ENCODE measurements at regions of chr1 and their contacts with region 1.

Region 1: DNA sequence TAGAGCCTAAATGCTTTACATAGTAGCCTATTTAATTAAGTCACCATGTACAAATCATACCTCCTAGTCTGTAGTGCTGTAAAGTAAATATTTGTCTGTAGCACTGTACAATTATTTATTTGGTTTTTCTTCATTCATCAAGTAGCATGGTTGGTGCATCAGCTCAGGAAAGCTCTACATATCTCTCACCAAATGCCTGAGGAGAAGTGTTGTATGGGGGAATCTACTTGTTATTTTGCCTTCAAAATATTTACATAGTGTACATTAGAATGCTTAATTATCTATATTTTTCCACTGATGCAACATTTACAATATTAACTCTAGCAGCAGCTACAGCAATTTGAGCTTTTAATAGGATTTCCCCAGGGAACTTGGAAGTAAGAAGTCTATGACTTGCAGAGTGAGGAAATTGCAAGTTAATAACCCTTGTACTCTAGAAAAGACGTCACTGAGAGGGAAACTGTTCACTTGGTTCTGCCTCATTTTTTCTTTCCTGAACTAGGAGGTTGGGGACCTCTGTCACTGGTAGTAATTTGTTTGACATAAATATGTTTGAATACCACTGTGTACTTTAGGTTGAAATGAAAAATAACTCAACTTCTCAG is 207.4 kb downstream of the PDE4B start:
- DNase-seq: no peak
- ATAC-seq: no peak
- H3K4me3 ChIP-seq: no peak overlapping the region
- H3K27ac ChIP-seq: no peak overlapping the region
- H3K4me1 ChIP-seq: no peaks in the 10 kb centered on the region
- H3K27me3 ChIP-seq: peaks cover 0 to 4% (median 0%) of the 10 kb centered on the region in 4 donors
- CTCF ChIP-seq: no peak

Region 2: DNA sequence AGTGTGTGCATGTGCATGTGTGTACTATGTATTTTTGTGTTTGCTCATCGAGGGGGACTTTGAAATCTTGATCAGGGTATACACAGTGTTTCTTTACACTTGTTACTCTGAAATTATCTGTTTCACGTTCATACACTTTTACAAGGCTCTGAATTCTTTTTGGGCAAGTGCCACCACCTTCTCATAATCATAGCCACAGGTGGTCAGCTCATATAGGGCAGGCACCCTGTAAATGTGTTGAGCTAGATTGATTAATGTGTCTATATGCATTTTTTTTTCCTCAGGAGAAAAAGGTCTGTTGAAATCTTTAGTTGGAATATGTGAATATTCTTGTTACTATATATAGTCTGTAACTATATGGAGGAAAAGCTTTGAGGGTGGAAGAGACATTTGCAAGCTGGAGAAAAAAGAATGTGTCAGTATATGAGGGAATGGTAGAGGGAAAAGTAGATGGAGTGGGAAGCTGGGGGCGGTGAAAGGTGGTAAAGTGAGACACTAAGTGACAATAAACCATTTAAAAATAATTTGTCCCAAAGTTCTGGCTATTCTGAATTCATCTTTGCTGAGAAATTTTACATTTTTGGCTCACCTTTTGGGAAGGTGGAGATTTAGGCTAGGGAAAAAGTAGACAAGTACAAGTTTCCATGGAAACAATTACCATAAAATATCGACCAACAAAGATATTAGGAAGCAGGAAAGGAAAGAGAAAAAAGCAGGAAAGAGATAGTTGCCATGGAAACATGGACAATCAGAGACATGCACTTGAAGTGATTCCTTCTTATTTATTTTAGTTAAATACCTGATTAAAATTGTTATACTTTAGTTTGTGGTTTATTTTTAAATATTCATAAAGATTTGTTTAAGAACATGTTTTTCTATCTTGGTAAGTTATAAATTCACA is 70.1 kb after region 1 on chr1:
- intact Hi-C with region 1: loop called in 1 of 3 experiments (anchors 10 kb)
- DNase-seq: no peak
- ATAC-seq: no peak
- H3K4me3 ChIP-seq: no peak overlapping the region
- H3K27ac ChIP-seq: no peak overlapping the region
- H3K4me1 ChIP-seq: no peaks in the 10 kb centered on the region
- H3K27me3 ChIP-seq: no peaks in the 10 kb centered on the region
- CTCF ChIP-seq: no peak

Measured in pancreas (tissue), 10 donors.